ENCODE measurements at regions of chr2 and their contacts with region 1.

Region 1: DNA sequence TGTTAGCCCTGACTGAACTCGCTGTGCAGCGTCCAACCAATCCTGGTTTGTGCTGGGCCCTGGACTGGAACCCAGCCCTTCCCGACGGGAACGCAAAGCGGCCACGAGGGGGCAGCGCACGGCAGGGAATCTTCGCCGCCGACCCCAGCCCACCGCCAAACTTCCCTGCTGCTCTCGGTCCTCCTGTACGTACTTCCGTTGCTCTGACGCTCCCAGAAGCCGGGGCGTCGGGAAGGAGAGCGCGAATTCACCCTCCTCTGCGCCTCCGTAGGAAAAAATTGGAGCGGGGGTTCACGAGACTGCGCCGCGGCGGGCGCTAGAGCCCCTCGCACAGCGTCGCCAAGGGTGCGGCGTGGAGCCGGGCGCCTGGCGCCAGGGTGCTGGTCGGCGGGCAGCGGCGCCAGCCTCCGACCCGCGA is 948 bp upstream of the SH3RF3 start:
- DNase-seq: peak; percentile 58
- H3K4me3 ChIP-seq: peak overlapping the region; percentile 44 to 57
- H3K27ac ChIP-seq: peak overlapping the region; percentile 32 to 55
- H3K4me1 ChIP-seq: no peaks in the 10 kb centered on the region
- H3K27me3 ChIP-seq: no peaks in the 10 kb centered on the region
- CTCF ChIP-seq: peak; percentile 84 to 90 (median 88)
- POLR2A ChIP-seq: no peak

Region 2: DNA sequence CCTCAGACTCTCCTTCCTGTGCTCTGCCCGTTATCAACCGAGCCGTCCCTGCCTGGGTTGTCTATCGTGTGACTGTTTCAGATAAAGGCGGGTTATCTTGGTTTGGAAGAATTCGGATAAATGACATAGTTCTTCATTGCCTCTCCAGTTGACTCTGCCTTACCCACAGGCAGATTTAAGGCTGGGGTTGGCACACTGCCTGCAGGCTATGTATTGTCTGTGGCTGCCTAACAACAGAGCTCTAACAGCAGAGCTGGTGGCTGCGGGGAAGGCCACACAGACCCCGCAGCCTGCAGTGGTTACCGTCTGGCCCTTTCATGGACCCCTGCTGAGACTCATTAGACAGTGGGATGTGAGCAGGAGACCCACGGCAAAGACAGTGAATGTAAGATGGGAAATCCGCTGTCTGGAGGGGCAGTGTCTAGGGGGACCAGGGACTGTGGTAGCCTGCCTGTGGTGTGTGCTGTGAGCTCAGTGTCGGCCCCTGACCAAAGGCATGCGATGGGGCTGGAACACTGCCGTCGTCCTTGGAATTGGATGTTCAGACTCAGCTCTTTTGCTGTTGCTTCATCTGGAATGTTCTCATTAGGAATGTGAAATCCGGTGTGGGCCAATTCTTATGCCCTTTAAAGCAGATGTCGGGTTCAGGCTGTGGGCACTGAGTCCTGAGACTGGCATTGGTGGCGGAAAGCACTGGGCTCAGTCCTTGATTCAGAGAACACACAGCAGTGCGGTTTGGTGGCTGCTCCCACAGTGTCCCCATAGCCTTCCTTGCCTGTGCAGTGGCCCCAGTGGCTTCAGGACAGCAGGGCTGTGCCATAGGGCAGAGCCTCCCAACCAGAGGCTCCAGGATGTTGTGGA is 45.5 kb after region 1 on chr2:
- intact Hi-C with region 1: loop called (anchors 5 kb)
- DNase-seq: peak; percentile 9
- H3K4me3 ChIP-seq: no peak overlapping the region
- H3K27ac ChIP-seq: peak overlapping the region; percentile 59 to 67
- H3K4me1 ChIP-seq: no peaks in the 10 kb centered on the region
- H3K27me3 ChIP-seq: no peaks in the 10 kb centered on the region
- CTCF ChIP-seq: no peak
- POLR2A ChIP-seq: no peak

Region 3: GRCh38 chr2:109185821-109186570 is 57.9 kb after region 1 on chr2:
- intact Hi-C with region 1: loop called (anchors 5 kb)
- DNase-seq: no peak
- H3K4me3 ChIP-seq: no peak overlapping the region
- H3K27ac ChIP-seq: peak overlapping the region; percentile 38 to 62
- H3K4me1 ChIP-seq: no peaks in the 10 kb centered on the region
- H3K27me3 ChIP-seq: no peaks in the 10 kb centered on the region
- CTCF ChIP-seq: no peak
- POLR2A ChIP-seq: no peak

Region 4: GRCh38 chr2:109510136-109511028 is 382.3 kb after region 1 on chr2:
- intact Hi-C with region 1: loop called (anchors 1 kb)
- DNase-seq: peak; percentile 81
- H3K4me3 ChIP-seq: no peak overlapping the region
- H3K27ac ChIP-seq: no peak overlapping the region
- H3K4me1 ChIP-seq: no peaks in the 10 kb centered on the region
- H3K27me3 ChIP-seq: no peaks in the 10 kb centered on the region
- CTCF ChIP-seq: peak; percentile 89 to 97 (median 92)
- POLR2A ChIP-seq: no peak

Measured in prostate gland (tissue), 2 donors.